ENCODE measurements at regions of chr9 and their contacts with region 1.

Region 1: DNA sequence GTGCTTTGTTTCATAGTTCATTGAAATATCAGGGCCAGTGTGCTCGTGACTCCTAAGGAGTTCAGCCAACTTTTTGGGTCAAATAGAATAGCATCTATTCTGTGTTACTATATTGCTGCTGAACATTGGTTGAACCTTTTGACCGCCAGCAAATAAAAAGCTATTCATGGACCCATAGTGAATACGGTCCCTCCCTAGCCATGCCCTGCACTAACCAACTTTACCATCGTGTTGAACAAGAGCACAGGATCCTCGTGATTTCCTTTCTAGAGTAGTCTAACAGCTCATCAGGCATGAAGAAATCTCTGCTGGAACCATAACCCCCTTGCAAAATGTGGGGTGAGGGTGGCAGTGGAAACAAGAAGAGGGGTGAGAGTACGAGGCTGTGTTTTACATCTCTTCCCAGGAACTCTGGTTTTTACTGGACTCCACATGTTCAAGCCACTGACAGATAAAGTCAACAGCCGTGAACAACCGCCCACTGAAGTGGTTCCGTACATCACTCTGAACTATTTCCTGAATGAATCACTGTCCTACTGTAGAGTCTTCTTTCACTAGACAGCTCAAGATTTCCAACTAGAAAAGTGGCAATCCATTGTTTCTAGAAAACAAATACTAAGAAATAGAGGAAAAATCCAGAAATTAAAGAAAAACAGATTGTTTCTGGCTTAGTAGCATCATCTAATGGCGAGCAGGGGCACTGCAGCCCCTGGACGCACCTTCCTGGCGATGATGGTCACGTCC is 70.1 kb upstream of the SPATA31E1 start:
- DNase-seq: peak; percentile 77
- ATAC-seq: peak; percentile 93
- H3K4me3 Mint-ChIP-seq: no peak overlapping the region
- H3K27ac Mint-ChIP-seq: no peak overlapping the region
- H3K4me1 Mint-ChIP-seq: peaks cover 24% of the 10 kb centered on the region
- H3K27me3 Mint-ChIP-seq: peaks cover 12% of the 10 kb centered on the region

Region 2: DNA sequence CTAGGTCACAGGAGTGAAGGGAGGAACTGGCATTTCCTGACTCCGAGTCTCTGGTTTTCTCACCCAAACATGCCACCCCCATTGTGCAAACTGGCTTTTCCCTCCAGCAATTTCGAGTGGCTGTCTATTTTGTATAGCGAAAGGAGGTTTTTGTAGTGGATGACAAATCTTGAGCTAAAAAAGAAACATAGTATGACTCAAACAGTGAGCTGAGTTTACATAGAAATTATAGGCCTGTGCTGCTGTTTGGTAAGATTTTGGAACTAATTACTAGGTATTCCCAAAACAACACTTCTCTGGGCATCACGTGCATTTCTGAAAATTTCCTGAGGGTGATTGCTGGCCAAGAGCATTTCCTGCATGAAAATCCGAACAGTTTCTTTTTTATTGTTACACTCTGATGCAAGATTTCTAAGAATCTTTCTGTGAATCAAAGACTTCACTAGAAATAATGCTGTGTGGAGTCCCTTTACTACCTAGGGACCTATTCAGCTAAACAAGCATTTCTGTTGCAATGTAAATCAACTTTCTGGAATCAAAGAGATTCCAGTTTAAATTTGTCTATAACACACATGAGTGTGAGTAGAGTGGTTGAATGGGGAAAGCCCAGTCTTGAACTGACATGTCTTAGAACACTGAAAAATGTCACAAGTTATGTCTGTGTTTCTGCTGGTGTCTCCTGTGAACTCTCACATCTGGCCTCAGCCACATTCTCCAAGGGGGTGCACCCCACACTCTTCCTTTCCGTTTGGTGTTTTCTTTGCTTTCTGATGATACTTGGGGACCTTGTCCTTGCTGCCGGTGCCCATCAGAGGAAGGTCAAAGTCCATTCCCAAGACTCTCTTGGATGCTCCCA is 348.2 kb before region 1 on chr9:
- CTCF ChIA-PET with region 1: interaction called, 4 read pairs
- POLR2A ChIA-PET with region 1: no interaction called
- intact Hi-C with region 1: loop called in 1 of 2 experiments (anchors 1 kb)
- DNase-seq: peak; percentile 66
- ATAC-seq: peak; percentile 89
- H3K4me3 Mint-ChIP-seq: no peak overlapping the region
- H3K27ac Mint-ChIP-seq: peak overlapping the region; percentile 84
- H3K4me1 Mint-ChIP-seq: peaks cover 28% of the 10 kb centered on the region
- H3K27me3 Mint-ChIP-seq: peaks cover 2% of the 10 kb centered on the region

Region 3: GRCh38 chr9:87678650-87679515 is 133.7 kb before region 1 on chr9:
- CTCF ChIA-PET with region 1: interaction called, 4 read pairs
- POLR2A ChIA-PET with region 1: no interaction called
- intact Hi-C with region 1: loop called (anchors 1 to 2 kb)
- DNase-seq: peak; percentile 55
- ATAC-seq: peak; percentile 36
- H3K4me3 Mint-ChIP-seq: no peak overlapping the region
- H3K27ac Mint-ChIP-seq: no peak overlapping the region
- H3K4me1 Mint-ChIP-seq: peaks cover 11% of the 10 kb centered on the region
- H3K27me3 Mint-ChIP-seq: no peaks in the 10 kb centered on the region

Region 4: DNA sequence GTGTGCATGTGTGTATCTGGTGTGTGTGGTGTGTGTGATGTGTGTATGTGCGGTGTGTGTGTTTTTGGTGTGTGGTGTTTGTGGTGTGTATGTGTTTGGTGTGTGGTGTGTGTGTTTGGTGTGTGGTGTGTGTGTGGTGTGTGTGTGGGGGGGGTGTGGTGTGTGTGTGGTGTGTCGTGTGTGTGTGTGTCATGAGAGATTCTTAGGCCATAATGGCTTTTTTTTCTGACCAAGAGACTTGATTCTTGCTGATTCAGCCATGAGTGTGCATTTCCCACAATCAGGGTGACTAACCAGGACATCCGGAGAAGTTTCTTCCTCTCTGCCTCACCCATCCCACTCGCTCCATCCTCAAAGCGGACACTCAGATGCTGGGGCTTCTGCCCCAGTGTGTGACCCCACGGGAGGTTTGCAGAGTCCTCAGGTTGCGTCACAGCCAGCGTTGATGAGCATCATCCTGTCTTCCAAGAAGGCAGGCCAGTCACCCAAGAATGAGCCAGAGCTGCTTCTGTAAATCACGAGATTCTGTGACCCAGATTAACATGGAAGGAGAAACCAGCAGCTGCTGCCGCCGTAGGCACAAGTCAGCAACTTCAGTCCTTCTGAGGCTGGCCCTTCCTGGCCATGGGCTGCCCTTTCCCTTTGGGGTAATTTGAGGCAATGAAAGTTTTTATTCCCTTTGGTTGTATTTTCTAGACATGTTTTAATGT is 99.1 kb before region 1 on chr9:
- CTCF ChIA-PET with region 1: interaction called, 4 read pairs
- POLR2A ChIA-PET with region 1: interaction called, 5 read pairs
- intact Hi-C with region 1: loop called (anchors 1 to 5 kb)
- DNase-seq: peak; percentile 75
- ATAC-seq: peak; percentile 64
- H3K4me3 Mint-ChIP-seq: no peak overlapping the region
- H3K27ac Mint-ChIP-seq: peak overlapping the region; percentile 5
- H3K4me1 Mint-ChIP-seq: peaks cover 46% of the 10 kb centered on the region
- H3K27me3 Mint-ChIP-seq: peaks cover 4% of the 10 kb centered on the region

Region 5: GRCh38 chr9:87787735-87788134 is 24.8 kb before region 1 on chr9:
- CTCF ChIA-PET with region 1: no interaction called
- POLR2A ChIA-PET with region 1: no interaction called
- intact Hi-C with region 1: no loop called
- DNase-seq: no peak
- ATAC-seq: no peak
- H3K4me3 Mint-ChIP-seq: no peak overlapping the region
- H3K27ac Mint-ChIP-seq: no peak overlapping the region
- H3K4me1 Mint-ChIP-seq: peaks cover 8% of the 10 kb centered on the region
- H3K27me3 Mint-ChIP-seq: peaks cover 2% of the 10 kb centered on the region

Region 6: GRCh38 chr9:87878989-87879511 is 66.5 kb after region 1 on chr9:
- CTCF ChIA-PET with region 1: interaction called, 3 read pairs
- POLR2A ChIA-PET with region 1: no interaction called
- intact Hi-C with region 1: loop called in 1 of 2 experiments (anchors 10 kb)
- DNase-seq: no peak
- ATAC-seq: peak; percentile 94
- H3K4me3 Mint-ChIP-seq: no peak overlapping the region
- H3K27ac Mint-ChIP-seq: peak overlapping the region; percentile 76
- H3K4me1 Mint-ChIP-seq: peaks cover 11% of the 10 kb centered on the region
- H3K27me3 Mint-ChIP-seq: no peaks in the 10 kb centered on the region